Activated B cell treated with CpG ODN at 0.5 μM for 24 hours (primary cell): ENCODE measurements at regions of chr1 and their contacts with region 1.

Region 1: GRCh38 chr1:116628448-116628847 is 39.1 kb downstream of the IGSF3 start:
- DNase-seq: no peak
- ATAC-seq: no peak
- H3K4me3 Mint-ChIP-seq: peak overlapping the region; percentile 60
- H3K27ac Mint-ChIP-seq: peak overlapping the region; percentile 86
- H3K4me1 Mint-ChIP-seq: peaks cover 27% of the 10 kb centered on the region
- H3K27me3 Mint-ChIP-seq: no peaks in the 10 kb centered on the region
- CTCF ChIP-seq: no peak

Region 2: GRCh38 chr1:115922801-115923200 is 705.6 kb before region 1 on chr1:
- CTCF ChIA-PET with region 1: no interaction called
- POLR2A ChIA-PET with region 1: no interaction called
- intact Hi-C with region 1: no loop called
- DNase-seq: no peak
- ATAC-seq: no peak
- H3K4me3 Mint-ChIP-seq: no peak overlapping the region
- H3K27ac Mint-ChIP-seq: no peak overlapping the region
- H3K4me1 Mint-ChIP-seq: peaks cover 21% of the 10 kb centered on the region
- H3K27me3 Mint-ChIP-seq: no peaks in the 10 kb centered on the region
- CTCF ChIP-seq: no peak

Region 3: DNA sequence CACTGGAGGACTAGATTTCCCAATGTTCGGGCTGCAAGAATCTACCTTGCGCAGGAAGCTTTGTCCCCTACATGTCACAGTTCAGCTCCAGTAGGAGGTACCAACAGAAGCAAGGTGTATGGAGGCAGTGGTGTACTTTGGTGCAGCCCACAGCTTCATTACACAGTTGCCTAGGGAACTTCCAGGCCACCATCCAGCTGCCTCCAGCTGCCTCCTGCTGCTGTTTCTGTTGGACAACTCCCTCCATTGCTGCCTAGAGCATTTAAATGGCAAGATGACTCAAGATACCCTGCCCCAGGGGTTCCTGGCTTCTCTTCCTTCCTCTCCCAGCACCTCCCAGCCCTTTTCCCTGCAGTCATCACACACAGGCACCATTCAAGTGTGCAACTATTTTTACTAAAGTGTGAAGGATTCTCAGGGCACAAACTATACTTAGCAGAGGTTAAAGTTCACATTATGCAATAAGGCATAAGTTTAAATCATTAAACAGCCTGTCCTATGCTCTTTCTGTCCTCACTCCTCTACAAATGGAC is 294.4 kb before region 1 on chr1:
- CTCF ChIA-PET with region 1: no interaction called
- POLR2A ChIA-PET with region 1: no interaction called
- intact Hi-C with region 1: no loop called
- DNase-seq: no peak
- ATAC-seq: no peak
- H3K4me3 Mint-ChIP-seq: no peak overlapping the region
- H3K27ac Mint-ChIP-seq: no peak overlapping the region
- H3K4me1 Mint-ChIP-seq: peaks cover 10% of the 10 kb centered on the region
- H3K27me3 Mint-ChIP-seq: peaks cover 11% of the 10 kb centered on the region
- CTCF ChIP-seq: no peak

Region 4: DNA sequence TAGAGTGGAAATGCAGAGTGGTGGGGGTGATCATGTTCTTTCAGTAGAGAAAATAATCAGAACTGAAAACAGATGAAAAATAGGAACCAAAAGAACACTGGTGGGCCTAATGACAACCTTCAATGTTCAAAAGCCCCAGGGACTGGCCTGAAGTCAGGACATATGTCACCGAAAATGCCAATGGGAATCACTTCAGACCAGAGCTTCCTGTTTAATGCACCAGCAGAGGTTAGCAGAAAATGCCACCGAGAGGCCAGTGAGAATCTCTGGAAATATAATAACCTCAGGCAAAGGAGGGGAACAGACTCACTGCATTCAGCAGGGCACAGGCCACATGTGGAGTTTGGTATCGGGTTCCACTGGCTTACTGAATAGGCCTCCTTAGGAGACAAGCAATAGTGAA is 41.7 kb before region 1 on chr1:
- CTCF ChIA-PET with region 1: no interaction called
- POLR2A ChIA-PET with region 1: interaction called, 3 read pairs
- intact Hi-C with region 1: loop called (anchors 5 kb)
- DNase-seq: no peak
- ATAC-seq: peak; percentile 76
- H3K4me3 Mint-ChIP-seq: peak overlapping the region; percentile 63
- H3K27ac Mint-ChIP-seq: peak overlapping the region; percentile 83
- H3K4me1 Mint-ChIP-seq: peaks cover 30% of the 10 kb centered on the region
- H3K27me3 Mint-ChIP-seq: no peaks in the 10 kb centered on the region
- CTCF ChIP-seq: no peak

Region 5: GRCh38 chr1:116674011-116674531 is 45.6 kb after region 1 on chr1:
- CTCF ChIA-PET with region 1: no interaction called
- POLR2A ChIA-PET with region 1: no interaction called
- intact Hi-C with region 1: loop called (anchors 5 kb)
- DNase-seq: no peak
- ATAC-seq: no peak
- H3K4me3 Mint-ChIP-seq: no peak overlapping the region
- H3K27ac Mint-ChIP-seq: no peak overlapping the region
- H3K4me1 Mint-ChIP-seq: peaks cover 3% of the 10 kb centered on the region
- H3K27me3 Mint-ChIP-seq: peaks cover 23% of the 10 kb centered on the region
- CTCF ChIP-seq: no peak